T-cell (primary cell): ENCODE measurements at regions of chr14 and their contacts with region 1.

Region 1: DNA sequence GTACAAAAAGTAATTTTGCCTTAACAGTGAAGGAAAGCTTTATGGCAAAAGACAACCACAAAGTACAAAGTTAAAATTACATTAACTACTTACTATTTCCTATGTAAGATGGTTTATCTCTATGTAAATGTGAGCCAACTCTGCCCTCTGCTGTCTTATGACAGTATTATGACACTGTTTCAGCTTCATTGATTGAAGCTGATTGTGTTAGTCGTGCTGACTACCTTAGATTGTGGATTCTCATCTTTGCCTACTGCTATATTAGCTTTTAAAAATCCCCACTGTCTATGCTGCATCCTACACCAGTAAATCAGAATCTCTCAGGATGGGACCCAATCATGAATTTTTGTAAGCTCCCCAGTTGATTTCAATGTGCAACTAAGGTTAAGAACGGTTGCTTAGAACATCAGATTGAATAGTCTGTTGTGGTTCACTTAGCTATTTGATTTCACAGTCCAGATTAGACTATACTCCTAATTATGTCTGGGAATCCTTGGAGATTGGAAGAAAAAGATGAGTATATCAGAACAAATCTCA is 12.2 kb upstream of the SPTB start:
- DNase-seq: peak in 16 of 35 experiments; percentile 9 to 79 (median 25)
- ATAC-seq: peak; percentile 82 to 96 (median 89)
- H3K4me3 ChIP-seq: no peak overlapping the region
- H3K4me3 Mint-ChIP-seq: no peak overlapping the region
- H3K27ac ChIP-seq: no peak overlapping the region
- H3K27ac Mint-ChIP-seq: no peak overlapping the region
- H3K4me1 ChIP-seq: no peaks in the 10 kb centered on the region
- H3K4me1 Mint-ChIP-seq: peaks cover 0 to 5% (median 0%) of the 10 kb centered on the region in 3 donors
- H3K27me3 ChIP-seq: peaks cover 4% of the 10 kb centered on the region in 2 experiments
- H3K27me3 Mint-ChIP-seq: peaks cover 3 to 5% of the 10 kb centered on the region in 2 donors

Region 2: DNA sequence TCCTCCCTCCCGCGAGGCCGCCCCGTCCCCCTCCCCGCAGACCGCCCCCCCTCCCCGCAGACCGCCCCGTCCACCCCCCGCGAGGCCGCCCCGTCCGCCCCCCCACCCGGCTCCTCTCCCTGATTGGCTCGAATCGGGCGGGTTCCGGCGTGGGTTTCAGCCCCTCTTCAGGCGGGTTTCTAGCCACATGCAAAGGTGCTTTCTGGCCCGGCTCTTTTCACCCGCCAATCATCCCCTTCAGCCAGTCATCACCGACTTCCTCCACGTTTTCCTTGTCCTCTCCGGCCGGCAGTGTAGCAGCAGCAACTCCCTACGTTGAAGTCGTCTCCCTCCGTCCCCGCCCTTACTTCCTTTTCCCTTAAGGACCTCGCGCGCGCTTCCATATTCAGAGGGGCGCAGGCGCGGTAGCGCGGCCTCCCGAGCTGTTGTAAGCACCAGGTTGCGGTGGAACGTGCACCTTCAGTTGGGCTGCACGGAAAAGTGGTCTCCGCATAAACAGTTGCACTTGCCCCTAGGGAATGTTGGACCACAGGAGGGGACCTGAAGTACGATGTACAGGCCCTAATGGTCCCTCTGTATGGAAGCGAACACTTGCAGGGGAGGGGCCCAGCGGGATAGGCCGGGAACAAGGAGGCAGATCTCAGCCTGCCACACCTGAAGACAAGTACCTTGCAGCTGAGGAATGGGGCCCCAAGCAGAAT is 553.1 kb before region 1 on chr14:
- CTCF ChIA-PET with region 1: interaction called in 1 of 2 experiments, 13 read pairs
- POLR2A ChIA-PET with region 1: no interaction called
- DNase-seq: peak; percentile 59 to 88 (median 75)
- ATAC-seq: peak; percentile 87 to 89 (median 88)
- H3K4me3 ChIP-seq: peak overlapping the region; percentile 66 to 83
- H3K4me3 Mint-ChIP-seq: peak overlapping the region; percentile 90
- H3K27ac ChIP-seq: peak overlapping the region; percentile 65
- H3K27ac Mint-ChIP-seq: peak overlapping the region; percentile 74 to 88
- H3K4me1 ChIP-seq: peaks cover 6 to 13% of the 10 kb centered on the region in 2 experiments
- H3K4me1 Mint-ChIP-seq: peaks cover 15 to 31% (median 20%) of the 10 kb centered on the region in 3 donors
- H3K27me3 ChIP-seq: no peaks in the 10 kb centered on the region
- H3K27me3 Mint-ChIP-seq: no peaks in the 10 kb centered on the region

Region 3: GRCh38 chr14:64671591-64671990 is 220.3 kb before region 1 on chr14:
- CTCF ChIA-PET with region 1: interaction called, 7 to 31 read pairs
- POLR2A ChIA-PET with region 1: no interaction called
- DNase-seq: peak in 4 of 35 experiments; percentile 4 to 76 (median 16)
- ATAC-seq: peak; percentile 41 to 62 (median 53)
- H3K4me3 ChIP-seq: no peak overlapping the region
- H3K4me3 Mint-ChIP-seq: no peak overlapping the region
- H3K27ac ChIP-seq: peak overlapping the region; percentile 27
- H3K27ac Mint-ChIP-seq: peak overlapping the region in 1 of 2 donors; percentile 66
- H3K4me1 ChIP-seq: peaks cover 12 to 30% of the 10 kb centered on the region in 2 experiments
- H3K4me1 Mint-ChIP-seq: peaks cover 21 to 32% (median 25%) of the 10 kb centered on the region in 3 donors
- H3K27me3 ChIP-seq: no peaks in the 10 kb centered on the region
- H3K27me3 Mint-ChIP-seq: peaks cover 0 to 3% of the 10 kb centered on the region in 2 donors

Region 4: GRCh38 chr14:64823305-64823861 is 68.5 kb before region 1 on chr14:
- CTCF ChIA-PET with region 1: interaction called, 44 to 60 read pairs
- POLR2A ChIA-PET with region 1: no interaction called
- DNase-seq: peak; percentile 27 to 77 (median 51)
- ATAC-seq: peak; percentile 84 to 93 (median 86)
- H3K4me3 ChIP-seq: no peak overlapping the region
- H3K4me3 Mint-ChIP-seq: peak overlapping the region in 2 of 3 donors; percentile 6 to 61
- H3K27ac ChIP-seq: no peak overlapping the region
- H3K27ac Mint-ChIP-seq: no peak overlapping the region
- H3K4me1 ChIP-seq: peaks cover 0 to 8% of the 10 kb centered on the region in 2 experiments
- H3K4me1 Mint-ChIP-seq: peaks cover 5 to 10% (median 6%) of the 10 kb centered on the region in 3 donors
- H3K27me3 ChIP-seq: peaks cover 0 to 38% of the 10 kb centered on the region in 2 experiments
- H3K27me3 Mint-ChIP-seq: peaks cover 20 to 31% of the 10 kb centered on the region in 2 donors

Region 5: GRCh38 chr14:64880221-64881121 is 11.4 kb before region 1 on chr14:
- CTCF ChIA-PET with region 1: interaction called, 15 read pairs
- POLR2A ChIA-PET with region 1: interaction called in 1 of 2 experiments, 3 read pairs
- DNase-seq: peak in 34 of 35 experiments; percentile 13 to 65 (median 44)
- ATAC-seq: peak; percentile 85 to 89 (median 88)
- H3K4me3 ChIP-seq: peak overlapping the region; percentile 61 to 64
- H3K4me3 Mint-ChIP-seq: peak overlapping the region; percentile 82 to 85 (median 82)
- H3K27ac ChIP-seq: no peak overlapping the region
- H3K27ac Mint-ChIP-seq: no peak overlapping the region
- H3K4me1 ChIP-seq: peaks cover 4 to 16% of the 10 kb centered on the region in 2 experiments
- H3K4me1 Mint-ChIP-seq: peaks cover 0 to 8% (median 8%) of the 10 kb centered on the region in 3 donors
- H3K27me3 ChIP-seq: peaks cover 15 to 29% of the 10 kb centered on the region in 2 experiments
- H3K27me3 Mint-ChIP-seq: peaks cover 19 to 45% of the 10 kb centered on the region in 2 donors

Region 6: DNA sequence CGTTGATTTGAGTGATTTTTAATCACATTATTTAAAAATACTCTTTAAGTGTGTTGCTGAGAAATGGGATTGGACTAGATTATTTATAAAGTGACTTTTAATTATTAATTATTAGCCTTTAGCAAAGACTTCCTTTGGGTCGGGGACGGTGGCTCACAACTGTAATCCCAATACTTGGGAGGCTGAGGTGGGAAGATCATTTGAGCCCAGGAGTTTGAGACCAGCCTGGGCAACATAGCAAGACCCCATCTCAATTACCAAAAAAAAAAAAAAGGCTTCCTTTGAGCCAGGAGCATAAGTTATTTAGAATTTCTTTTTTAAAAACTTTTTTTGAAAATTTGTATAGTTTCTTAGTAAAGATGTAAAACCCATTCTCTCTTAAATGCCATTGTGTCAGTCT is 31.1 kb after region 1 on chr14:
- CTCF ChIA-PET with region 1: interaction called, 3 to 10 read pairs
- POLR2A ChIA-PET with region 1: interaction called in 1 of 2 experiments, 5 read pairs
- DNase-seq: no peak
- ATAC-seq: no peak
- H3K4me3 ChIP-seq: no peak overlapping the region
- H3K4me3 Mint-ChIP-seq: no peak overlapping the region
- H3K27ac ChIP-seq: no peak overlapping the region
- H3K27ac Mint-ChIP-seq: no peak overlapping the region
- H3K4me1 ChIP-seq: peaks cover 21 to 22% of the 10 kb centered on the region in 2 experiments
- H3K4me1 Mint-ChIP-seq: peaks cover 68 to 70% (median 68%) of the 10 kb centered on the region in 3 donors
- H3K27me3 ChIP-seq: no peaks in the 10 kb centered on the region
- H3K27me3 Mint-ChIP-seq: no peaks in the 10 kb centered on the region